ENCODE measurements at regions of chr10 and their contacts with region 1.

Region 1: DNA sequence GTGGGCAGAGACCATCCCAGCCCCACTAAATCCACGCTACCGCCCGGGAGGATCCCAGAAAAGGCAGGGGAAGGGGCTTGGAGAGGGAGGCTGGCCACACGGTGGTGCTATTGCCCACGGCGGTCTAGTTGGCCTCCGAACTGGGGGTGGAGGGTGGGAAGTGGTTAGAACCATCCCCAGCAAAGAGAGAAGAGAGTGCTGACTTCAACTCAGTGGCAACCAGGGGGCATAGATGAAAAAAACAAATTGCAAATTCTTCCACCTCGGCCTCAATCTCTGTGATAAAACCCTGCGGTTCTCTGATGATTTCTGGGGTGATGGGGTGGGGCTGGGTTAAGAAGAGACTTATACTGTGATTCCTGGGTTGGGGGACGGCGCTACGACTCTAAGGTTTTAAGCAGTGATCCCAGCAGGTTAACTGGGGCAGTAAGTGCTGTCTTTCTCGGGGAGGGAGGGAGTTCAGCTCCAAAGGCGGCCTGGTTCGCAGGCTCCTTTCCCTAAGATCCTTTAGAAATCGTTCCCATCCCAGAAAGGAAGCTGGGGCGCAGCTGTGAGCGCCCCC is 154.5 kb upstream of the LYZL2 start:
- DNase-seq: peak; percentile 51 to 94
- H3K4me3 ChIP-seq: peak overlapping the region; percentile 31 to 83 (median 54); a peak in 7 of 8 replicates
- H3K27ac ChIP-seq: no peak overlapping the region
- H3K4me1 ChIP-seq: peaks cover 0 to 6% (median 2%) of the 10 kb centered on the region in 4 experiments; a peak in 2 of 7 replicates
- H3K27me3 ChIP-seq: peaks cover 0 to 12% (median 6%) of the 10 kb centered on the region in 4 experiments; a peak in 3 of 7 replicates
- CTCF ChIP-seq: peak; percentile 83 to 93 (median 92)
- EP300 ChIP-seq: no peak
- POLR2A ChIP-seq: no peak
- RAD21 ChIP-seq: peak; percentile 92 to 95

Region 2: GRCh38 chr10:30769361-30769760 is 14.7 kb before region 1 on chr10:
- CTCF ChIA-PET with region 1: interaction called, 15 read pairs
- POLR2A ChIA-PET with region 1: no interaction called
- DNase-seq: no peak
- H3K4me3 ChIP-seq: no peak overlapping the region
- H3K27ac ChIP-seq: no peak overlapping the region
- H3K4me1 ChIP-seq: no peaks in the 10 kb centered on the region
- H3K27me3 ChIP-seq: no peaks in the 10 kb centered on the region
- CTCF ChIP-seq: no peak
- EP300 ChIP-seq: no peak
- POLR2A ChIP-seq: no peak
- RAD21 ChIP-seq: no peak

Region 3: GRCh38 chr10:30812018-30812851 is 28.2 kb after region 1 on chr10:
- CTCF ChIA-PET with region 1: interaction called, 13 read pairs
- POLR2A ChIA-PET with region 1: interaction called, 3 read pairs
- DNase-seq: no peak
- H3K4me3 ChIP-seq: no peak overlapping the region
- H3K27ac ChIP-seq: no peak overlapping the region
- H3K4me1 ChIP-seq: peaks cover 0 to 5% (median 1%) of the 10 kb centered on the region in 4 experiments; a peak in 2 of 7 replicates
- H3K27me3 ChIP-seq: no peaks in the 10 kb centered on the region
- CTCF ChIP-seq: no peak
- EP300 ChIP-seq: no peak
- POLR2A ChIP-seq: no peak
- RAD21 ChIP-seq: no peak

Region 4: DNA sequence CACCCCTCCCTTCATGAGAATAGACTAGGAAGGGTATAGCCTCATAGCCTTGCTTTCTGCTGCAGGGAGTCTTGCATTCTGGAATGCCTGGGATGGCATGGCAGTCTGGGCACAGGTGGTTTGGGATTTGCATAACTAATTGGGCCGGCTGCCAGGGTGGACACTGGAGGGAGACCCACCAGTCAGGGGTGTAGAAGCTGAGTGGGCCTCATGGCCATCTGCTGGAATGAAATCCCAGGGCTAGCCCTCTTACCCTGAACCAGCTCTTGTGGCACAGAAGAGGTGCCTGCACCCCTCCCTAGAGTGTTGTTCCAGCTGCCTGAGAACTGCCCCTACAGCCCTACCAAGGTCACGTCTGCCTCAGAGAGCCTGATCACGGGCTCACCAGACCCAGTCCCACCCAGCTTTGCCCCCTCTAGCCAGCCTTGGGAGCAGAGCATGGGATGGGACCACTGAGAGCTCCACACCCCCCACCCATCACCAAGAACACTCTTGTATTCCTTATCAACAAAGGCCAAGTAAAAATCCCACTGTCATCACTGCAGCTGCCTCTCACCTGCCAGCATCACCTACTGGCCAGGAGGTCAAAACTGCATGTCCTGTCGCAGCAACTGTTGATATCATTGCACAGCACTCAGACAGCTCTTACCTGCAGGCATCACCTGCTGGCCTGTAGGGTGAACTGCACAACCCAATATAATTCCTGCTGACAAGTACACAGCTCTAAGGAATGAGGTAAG is 683.9 kb after region 1 on chr10:
- CTCF ChIA-PET with region 1: interaction called, 14 read pairs
- POLR2A ChIA-PET with region 1: no interaction called
- DNase-seq: peak; percentile 54 to 69
- H3K4me3 ChIP-seq: no peak overlapping the region
- H3K27ac ChIP-seq: no peak overlapping the region
- H3K4me1 ChIP-seq: no peaks in the 10 kb centered on the region; a peak in 2 of 7 replicates
- H3K27me3 ChIP-seq: no peaks in the 10 kb centered on the region
- CTCF ChIP-seq: peak; percentile 87 to 99 (median 97)
- EP300 ChIP-seq: no peak
- POLR2A ChIP-seq: no peak
- RAD21 ChIP-seq: peak; percentile 93 to 95

Region 5: GRCh38 chr10:31490858-31491504 is 707.0 kb after region 1 on chr10:
- CTCF ChIA-PET with region 1: interaction called, 17 read pairs
- POLR2A ChIA-PET with region 1: no interaction called
- DNase-seq: peak in 1 of 2 experiments; percentile 49
- H3K4me3 ChIP-seq: no peak overlapping the region
- H3K27ac ChIP-seq: no peak overlapping the region
- H3K4me1 ChIP-seq: no peaks in the 10 kb centered on the region
- H3K27me3 ChIP-seq: no peaks in the 10 kb centered on the region
- CTCF ChIP-seq: peak in 2 of 3 experiments; percentile 66 to 76; a peak in 2 of 4 replicates
- EP300 ChIP-seq: no peak
- POLR2A ChIP-seq: no peak
- RAD21 ChIP-seq: peak; percentile 85 to 91